Aorta (tissue), 5 donors: ENCODE measurements at regions of chr4 and their contacts with region 1.

Region 1: GRCh38 chr4:107989537-107990386 is at the start of gene HADH:
- DNase-seq: peak; percentile 95 to 97
- ATAC-seq: peak; percentile 100
- H3K4me3 ChIP-seq: peak within 1 kb of the TSS; percentile 61 to 83
- H3K27ac ChIP-seq: peak within 1 kb of the TSS; percentile 79 to 93
- H3K4me1 ChIP-seq: peaks cover 3 to 7% of the 10 kb centered on the region in 2 donors
- H3K27me3 ChIP-seq: no peaks in the 10 kb centered on the region
- total RNA-seq, gene HADH: 38.2 to 79.2 TPM

Region 2: GRCh38 chr4:107548211-107548905 is 441.4 kb before region 1 on chr4:
- intact Hi-C with region 1: no loop called
- DNase-seq: no peak
- ATAC-seq: no peak
- H3K4me3 ChIP-seq: no peak overlapping the region
- H3K27ac ChIP-seq: no peak overlapping the region
- H3K4me1 ChIP-seq: no peaks in the 10 kb centered on the region
- H3K27me3 ChIP-seq: no peaks in the 10 kb centered on the region

Region 3: DNA sequence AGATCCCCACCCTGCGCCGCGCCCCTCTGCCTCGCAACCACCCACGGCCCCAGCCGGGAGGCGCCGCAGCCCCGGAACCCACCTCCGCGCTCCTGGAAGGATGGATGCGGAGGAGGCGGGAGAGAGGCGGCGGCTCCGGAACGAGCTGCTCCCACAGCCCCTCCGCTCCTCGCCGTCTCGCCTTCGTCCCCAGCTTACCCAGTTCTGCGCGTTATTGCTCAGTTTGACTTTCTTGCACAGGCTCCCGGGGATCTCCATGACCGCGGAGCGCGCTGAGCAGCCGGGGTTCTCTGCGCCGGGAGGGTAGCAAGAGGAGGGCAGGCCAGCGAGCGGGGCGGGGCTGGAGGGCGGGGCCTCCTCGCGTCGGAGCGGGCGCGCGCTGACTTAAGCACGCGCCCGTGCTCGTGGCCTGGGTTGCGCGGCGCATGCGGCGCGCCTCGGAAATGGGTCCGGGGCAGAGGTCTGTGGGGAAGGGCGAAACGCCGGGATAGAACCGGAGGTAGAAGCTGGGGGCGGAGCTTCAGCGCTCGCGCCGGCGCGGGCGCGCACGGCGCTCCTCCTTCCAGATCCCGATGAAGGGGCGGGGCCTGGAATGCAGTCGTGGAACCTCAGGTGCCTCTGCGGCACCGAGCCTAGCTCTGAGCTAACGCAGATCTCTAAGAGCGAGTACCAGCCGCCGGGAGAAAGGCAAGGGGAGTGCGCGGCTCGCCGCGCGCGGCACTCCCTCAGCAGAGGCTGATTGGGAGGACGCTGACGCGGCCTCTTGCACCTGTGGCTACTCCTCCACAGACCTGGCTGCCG is 269.6 kb before region 1 on chr4 and contains the start of gene PAPSS1:
- intact Hi-C with region 1: loop called in 1 of 2 experiments (anchors 10 kb)
- DNase-seq: peak; percentile 98 to 99
- ATAC-seq: peak; percentile 100
- H3K4me3 ChIP-seq: peak within 1 kb of the TSS; percentile 76 to 94
- H3K27ac ChIP-seq: peak within 1 kb of the TSS in 1 of 2 donors; percentile 77
- H3K4me1 ChIP-seq: peaks cover 0 to 2% of the 10 kb centered on the region in 2 donors
- H3K27me3 ChIP-seq: no peaks in the 10 kb centered on the region
- total RNA-seq, gene PAPSS1: 32.8 to 38.5 TPM

Region 4: GRCh38 chr4:107755841-107756356 is 233.9 kb before region 1 on chr4:
- intact Hi-C with region 1: no loop called
- DNase-seq: no peak
- ATAC-seq: no peak
- H3K4me3 ChIP-seq: no peak overlapping the region
- H3K27ac ChIP-seq: no peak overlapping the region
- H3K4me1 ChIP-seq: no peaks in the 10 kb centered on the region
- H3K27me3 ChIP-seq: peaks cover 0 to 2% of the 10 kb centered on the region in 2 donors

Region 5: DNA sequence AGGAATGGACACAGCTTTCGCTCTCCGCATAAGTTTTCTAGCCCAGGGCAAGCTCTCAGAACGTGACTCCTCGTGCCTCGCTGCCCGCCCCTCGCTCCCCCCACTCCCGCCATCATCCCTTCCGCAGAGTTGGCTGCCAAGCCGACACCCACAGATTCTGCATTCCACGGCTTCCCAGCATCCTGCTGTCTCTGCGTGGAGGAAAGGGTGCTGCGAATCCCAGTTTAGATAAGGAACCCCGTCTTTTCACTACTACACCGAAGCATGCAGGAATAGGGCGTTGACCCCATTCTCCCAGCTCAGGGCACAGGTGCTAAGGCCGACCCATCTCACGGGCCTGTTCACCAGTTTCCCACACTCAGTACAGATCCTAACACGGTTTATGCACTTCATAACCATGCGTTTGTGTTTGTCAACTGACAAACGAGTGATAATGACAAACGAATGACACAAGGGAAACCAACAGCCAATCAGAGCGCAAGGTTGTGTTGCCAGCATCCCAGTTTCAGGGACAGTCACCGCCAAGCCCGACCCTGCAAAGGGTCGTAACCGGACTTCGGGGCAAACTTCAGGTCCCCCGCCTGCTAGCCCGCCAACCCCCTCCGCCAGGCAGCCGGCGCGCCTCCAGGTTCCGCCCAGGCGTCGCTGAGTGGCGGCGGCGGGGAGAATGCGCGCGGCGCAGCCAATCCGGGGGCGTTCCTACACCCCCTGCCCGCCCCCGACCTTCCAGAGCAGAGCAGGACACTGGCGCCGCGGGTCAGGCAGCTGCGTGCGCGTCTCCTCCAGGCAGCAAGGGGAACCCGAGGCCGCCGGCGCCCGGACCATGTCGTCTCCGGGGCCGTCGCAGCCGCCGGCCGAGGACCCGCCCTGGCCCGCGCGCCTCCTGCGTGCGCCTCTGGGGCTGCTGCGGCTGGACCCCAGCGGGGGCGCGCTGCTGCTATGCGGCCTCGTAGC is 58.7 kb before region 1 on chr4 and contains the start of gene CYP2U1:
- intact Hi-C with region 1: loop called (anchors 1 to 2 kb)
- DNase-seq: peak; percentile 93 to 95
- ATAC-seq: peak; percentile 97
- H3K4me3 ChIP-seq: peak within 1 kb of the TSS; percentile 58 to 78
- H3K27ac ChIP-seq: peak within 1 kb of the TSS in 1 of 2 donors; percentile 72
- H3K4me1 ChIP-seq: no peaks in the 10 kb centered on the region
- H3K27me3 ChIP-seq: no peaks in the 10 kb centered on the region
- total RNA-seq, gene CYP2U1: 13.8 to 16.7 TPM